Left ventricle myocardium inferior (tissue), 1 donor: ENCODE measurements at regions of chr22 and their contacts with region 1.

Region 1: DNA sequence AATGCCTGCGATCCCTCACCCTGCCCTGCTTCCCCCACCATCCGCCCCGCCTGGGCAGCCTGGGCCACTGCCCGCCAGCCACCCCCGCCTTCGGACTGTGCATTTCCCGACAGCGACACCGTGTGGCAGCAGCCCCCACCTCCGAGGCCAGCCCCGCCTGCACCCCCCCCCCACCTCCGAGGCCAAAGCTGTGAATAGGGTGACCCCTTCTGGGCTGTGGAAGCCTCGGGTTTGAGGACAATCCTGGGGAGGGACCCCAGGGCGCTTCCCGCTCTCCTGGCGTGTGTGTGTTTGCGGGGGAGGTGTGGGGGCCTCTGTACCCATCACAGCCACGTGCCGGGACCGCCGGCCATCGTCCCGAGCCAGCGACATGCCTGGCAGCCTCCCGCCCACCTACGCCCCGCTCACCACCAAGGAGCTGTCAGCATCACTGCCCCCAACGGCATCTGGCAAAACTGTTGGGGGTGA is 33.8 kb upstream of the PPARA start:
- DNase-seq: peak; percentile 95
- H3K4me3 ChIP-seq: no peak overlapping the region
- H3K27ac ChIP-seq: peak overlapping the region; percentile 88
- H3K4me1 ChIP-seq: peaks cover 64% of the 10 kb centered on the region
- H3K27me3 ChIP-seq: no peaks in the 10 kb centered on the region
- CTCF ChIP-seq: peak; percentile 83

Region 2: DNA sequence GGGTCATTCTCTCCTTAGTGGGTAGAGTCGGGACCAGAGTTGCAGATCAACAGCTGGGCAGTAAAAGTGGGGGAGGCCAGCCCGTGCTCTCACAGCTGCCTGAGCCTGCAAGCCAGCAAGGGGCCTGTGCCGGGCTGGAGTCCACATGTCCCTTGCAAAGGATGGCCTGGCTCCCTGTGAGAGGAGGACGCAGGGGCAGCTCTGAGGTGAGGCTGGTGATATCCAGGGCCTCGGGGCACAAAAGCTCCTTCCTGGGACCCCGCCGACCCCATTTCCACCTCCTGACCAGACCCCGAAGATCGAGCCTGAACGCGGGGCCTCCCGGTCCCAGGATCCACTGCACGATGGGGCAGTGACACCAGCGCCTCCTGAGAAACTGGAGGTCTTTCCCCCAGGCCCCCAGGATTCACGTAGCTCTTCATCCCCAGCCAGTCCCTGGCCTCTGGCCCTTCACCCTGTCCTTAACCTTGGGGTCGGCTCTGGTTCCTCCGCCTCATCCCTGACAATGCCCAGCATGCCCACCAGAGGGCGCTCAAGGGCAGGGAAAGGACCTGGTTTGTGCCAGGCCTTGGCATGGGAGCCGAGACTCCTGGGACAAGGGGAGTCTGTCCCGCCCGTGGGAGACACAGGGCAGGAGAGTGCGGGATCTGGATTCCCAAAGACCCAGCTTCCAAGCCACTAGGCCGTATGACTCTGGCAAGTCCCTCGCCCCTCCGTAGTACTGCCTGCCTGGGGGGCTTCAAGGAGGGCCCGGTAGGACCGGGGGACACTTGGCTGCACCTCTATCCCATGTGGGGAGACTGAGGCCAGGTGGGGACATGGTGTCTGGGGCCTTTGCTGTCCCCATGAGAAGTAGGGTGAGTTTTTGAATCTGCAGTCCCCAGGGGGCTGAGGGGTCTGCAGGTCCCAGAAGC is 121.8 kb before region 1 on chr22:
- intact Hi-C with region 1: loop called (anchors 5 kb)
- DNase-seq: peak; percentile 85
- H3K4me3 ChIP-seq: no peak overlapping the region
- H3K27ac ChIP-seq: peak overlapping the region; percentile 94
- H3K4me1 ChIP-seq: peaks cover 62% of the 10 kb centered on the region
- H3K27me3 ChIP-seq: no peaks in the 10 kb centered on the region
- CTCF ChIP-seq: peak; percentile 97

Region 3: DNA sequence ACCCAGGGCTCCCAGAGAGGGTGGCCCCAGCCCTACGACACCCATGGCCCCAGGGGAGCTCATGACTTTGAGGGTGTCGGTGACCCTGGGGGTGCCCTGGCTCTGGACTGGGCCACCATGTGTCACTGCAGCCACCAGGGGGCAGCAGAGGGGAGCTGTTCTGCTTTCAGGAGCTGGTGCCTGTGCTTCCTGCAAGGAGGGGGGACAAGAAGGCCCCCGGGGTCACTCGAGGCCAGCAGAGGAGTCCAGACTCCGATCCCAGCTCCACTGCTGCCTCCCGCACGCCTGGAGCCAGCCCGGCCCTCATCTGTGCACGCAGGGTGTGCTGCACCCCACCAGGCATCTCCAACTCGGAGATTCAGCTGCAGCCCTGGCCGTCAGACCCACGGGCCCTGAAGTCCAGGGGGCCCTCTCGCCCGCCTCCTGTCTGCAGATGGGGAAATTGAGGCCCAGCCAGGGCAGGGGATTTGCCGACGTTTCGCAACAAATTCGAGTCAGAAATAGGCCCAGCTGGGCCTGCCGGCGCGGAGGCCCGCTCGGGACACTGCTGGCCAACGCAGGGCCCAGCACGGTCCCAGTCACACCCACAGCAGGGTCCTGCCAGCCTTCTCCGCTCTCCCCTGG is 110.0 kb before region 1 on chr22:
- intact Hi-C with region 1: loop called (anchors 5 kb)
- DNase-seq: peak; percentile 95
- H3K4me3 ChIP-seq: peak overlapping the region; percentile 31
- H3K27ac ChIP-seq: peak overlapping the region; percentile 98
- H3K4me1 ChIP-seq: peaks cover 71% of the 10 kb centered on the region
- H3K27me3 ChIP-seq: no peaks in the 10 kb centered on the region
- CTCF ChIP-seq: peak; percentile 98